ENCODE measurements at regions of chr1 and their contacts with region 1.

Region 1: GRCh38 chr1:6475381-6476133 is 9.6 kb upstream of the TNFRSF25 start:
- DNase-seq: peak; percentile 13 to 79
- H3K4me3 ChIP-seq: no peak overlapping the region
- H3K4me1 ChIP-seq: no peaks in the 10 kb centered on the region
- H3K27me3 ChIP-seq: no peaks in the 10 kb centered on the region

Region 2: DNA sequence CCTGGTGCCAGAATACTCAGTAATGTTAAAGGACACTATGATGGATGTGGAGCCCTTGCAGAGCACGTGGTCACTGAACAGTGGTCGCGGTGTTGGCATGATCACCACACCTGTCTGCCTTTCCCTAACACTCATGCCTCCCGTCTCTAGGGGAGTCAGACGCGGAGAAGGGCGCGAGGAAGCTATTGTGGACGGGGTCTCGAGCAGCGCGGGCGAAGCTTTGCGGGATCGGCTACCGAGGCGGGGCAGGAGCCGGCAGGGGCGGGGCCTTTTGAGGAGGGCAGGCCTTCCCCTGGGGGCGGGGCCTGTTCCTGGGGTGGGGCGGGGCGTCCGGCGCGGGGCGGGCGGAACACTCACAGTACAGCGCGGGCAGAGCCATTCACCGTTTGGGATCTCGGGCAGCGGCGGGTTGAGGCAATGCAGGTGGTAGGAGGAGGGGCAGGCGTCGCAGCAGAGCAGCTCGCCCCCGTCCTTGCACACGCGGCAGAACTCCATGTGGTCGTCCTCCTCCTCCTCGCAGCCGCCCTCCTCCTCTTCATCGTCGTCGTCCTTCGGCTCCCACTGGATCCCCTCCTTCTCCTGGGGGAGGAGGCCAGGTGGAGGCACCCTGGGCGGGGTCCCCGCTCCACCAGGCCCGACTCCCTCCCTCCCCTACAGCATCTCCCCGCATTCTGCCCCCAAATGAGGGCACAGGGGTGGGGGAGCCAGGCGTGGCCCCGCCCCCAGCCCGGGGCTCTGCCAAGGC is 326.9 kb before region 1 on chr1:
- in situ Hi-C with region 1: no loop called
- DNase-seq: peak; percentile 65 to 91
- H3K4me3 ChIP-seq: peak overlapping the region; percentile 9
- H3K4me1 ChIP-seq: 0 out of 2 replicates have a peak, but pooled peaks cover 3% of the 10 kb centered on the region
- H3K27me3 ChIP-seq: no peaks in the 10 kb centered on the region; the same call in 1 of the 2 replicates

Region 3: GRCh38 chr1:6393400-6394187 is 82.0 kb before region 1 on chr1 and contains the start of gene ACOT7:
- in situ Hi-C with region 1: no loop called
- DNase-seq: peak; percentile 83 to 93
- H3K4me3 ChIP-seq: peak within 1 kb of the TSS; percentile 60
- H3K4me1 ChIP-seq: peaks cover 15% of the 10 kb centered on the region
- H3K27me3 ChIP-seq: no peaks in the 10 kb centered on the region

Region 4: GRCh38 chr1:6850537-6850936 is 375.0 kb after region 1 on chr1:
- in situ Hi-C with region 1: no loop called
- DNase-seq: no peak
- H3K4me3 ChIP-seq: no peak overlapping the region
- H3K4me1 ChIP-seq: no peaks in the 10 kb centered on the region
- H3K27me3 ChIP-seq: no peaks in the 10 kb centered on the region

Region 5: GRCh38 chr1:7224644-7225043 is 749.1 kb after region 1 on chr1:
- in situ Hi-C with region 1: loop called (anchors 10 kb)
- DNase-seq: no peak
- H3K4me3 ChIP-seq: no peak overlapping the region
- H3K4me1 ChIP-seq: no peaks in the 10 kb centered on the region
- H3K27me3 ChIP-seq: no peaks in the 10 kb centered on the region